Gastrocnemius medialis (tissue), 4 donors: ENCODE measurements at regions of chr15 and their contacts with region 1.

Region 1: DNA sequence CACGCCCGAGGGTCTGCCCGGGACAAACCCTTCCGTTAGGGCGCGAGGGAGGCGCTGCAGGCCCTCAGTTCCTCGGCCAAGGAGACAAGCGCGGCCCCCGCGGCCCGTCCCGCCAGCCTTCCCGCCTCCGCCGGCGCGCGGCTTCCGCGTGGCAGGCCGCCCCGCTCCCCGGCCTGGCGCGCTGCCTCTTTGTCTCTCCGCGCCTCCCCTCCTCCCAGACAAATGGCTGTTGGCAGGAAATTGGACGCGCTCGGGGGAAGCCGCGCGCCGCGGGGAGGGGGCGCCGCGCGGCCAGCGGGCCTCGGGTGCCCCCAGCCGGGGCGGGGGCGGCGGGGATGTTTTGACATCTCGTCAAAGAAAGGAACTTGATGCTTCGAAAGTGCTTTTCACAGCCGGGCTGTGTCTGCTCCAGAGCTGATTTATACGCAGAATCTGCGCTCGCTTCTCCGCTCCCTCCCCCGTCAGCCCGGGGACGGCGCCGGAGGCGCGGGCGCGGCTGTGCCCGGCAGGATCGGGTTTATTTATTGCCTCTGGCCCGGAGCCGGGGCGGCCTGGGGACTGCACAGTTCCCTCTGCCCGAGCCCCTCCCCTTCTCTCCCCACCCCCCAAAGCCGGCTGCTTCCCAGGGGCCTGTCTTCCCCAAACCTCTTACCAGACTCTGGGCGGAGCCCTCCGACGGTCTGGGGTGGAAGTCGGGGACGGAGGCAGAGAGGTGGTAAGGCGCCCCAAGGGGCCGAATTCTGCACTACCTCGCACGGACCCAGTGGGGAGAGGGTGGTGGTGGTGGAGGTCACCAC is 20.7 kb downstream of the SHF start:
- DNase-seq: peak; percentile 64 to 78
- ATAC-seq: peak; percentile 78 to 82
- H3K4me3 ChIP-seq: peak overlapping the region; percentile 66 to 77 (median 75)
- H3K27ac ChIP-seq: peak overlapping the region; percentile 84 to 92 (median 89)
- H3K4me1 ChIP-seq: peaks cover 0 to 4% of the 10 kb centered on the region in 2 donors
- H3K27me3 ChIP-seq: no peaks in the 10 kb centered on the region
- CTCF ChIP-seq: peak; percentile 26 to 59 (median 51)
- POLR2A ChIP-seq: peak; percentile 14 to 20

Region 2: GRCh38 chr15:45187894-45188830 is 21.1 kb after region 1 on chr15 and contains the start of gene SHF:
- in situ Hi-C with region 1: no loop called
- intact Hi-C with region 1: loop called (anchors 2 kb)
- DNase-seq: no peak
- ATAC-seq: peak; percentile 43 to 61
- H3K4me3 ChIP-seq: peak within 1 kb of the TSS; percentile 63 to 76 (median 70)
- H3K27ac ChIP-seq: peak within 1 kb of the TSS; percentile 52 to 72 (median 70)
- H3K4me1 ChIP-seq: peaks cover 11 to 14% of the 10 kb centered on the region in 2 donors
- H3K27me3 ChIP-seq: no peaks in the 10 kb centered on the region
- CTCF ChIP-seq: no peak
- POLR2A ChIP-seq: peak; percentile 7 to 28
- total RNA-seq, gene SHF: 0.80 to 3.3 (median 1.7) TPM

Region 3: DNA sequence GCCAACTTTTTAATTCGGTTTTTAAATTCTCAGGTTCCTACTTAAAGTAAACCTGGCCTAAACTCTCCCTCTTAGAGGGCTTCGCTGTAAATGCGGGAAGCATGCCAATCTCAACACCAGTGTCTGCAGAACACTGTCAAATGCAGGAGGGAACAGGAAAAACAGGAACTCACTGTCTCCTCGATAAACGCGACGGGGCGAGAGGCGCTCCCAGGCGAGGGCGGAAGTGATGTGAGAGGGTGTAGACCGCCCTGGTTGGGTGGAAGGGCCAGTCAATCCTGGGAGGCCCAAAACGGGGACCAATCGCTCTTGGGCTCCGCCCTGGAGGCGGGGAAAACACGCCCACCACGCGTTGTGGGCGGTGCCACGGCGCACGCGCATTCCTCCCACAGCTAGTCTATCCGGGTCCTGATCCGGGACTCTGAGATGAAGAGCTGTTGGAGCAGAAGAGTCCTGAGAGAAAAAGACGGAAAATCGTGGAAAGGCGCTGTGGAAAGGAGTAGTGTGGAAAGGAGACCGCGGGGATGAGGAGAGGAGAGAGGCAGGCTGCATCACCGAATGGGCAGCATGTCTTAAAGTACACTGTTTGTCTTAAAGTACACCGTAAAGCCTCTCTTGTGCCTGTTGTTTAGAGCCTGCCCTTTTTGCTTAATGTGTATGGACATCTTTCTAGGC is 112.1 kb after region 1 on chr15:
- in situ Hi-C with region 1: no loop called
- intact Hi-C with region 1: loop called (anchors 1 kb)
- DNase-seq: peak; percentile 97 to 98
- ATAC-seq: peak; percentile 99
- H3K4me3 ChIP-seq: peak overlapping the region; percentile 58 to 82 (median 70)
- H3K27ac ChIP-seq: peak overlapping the region; percentile 81 to 95 (median 87)
- H3K4me1 ChIP-seq: peaks cover 5 to 13% of the 10 kb centered on the region in 2 donors
- H3K27me3 ChIP-seq: no peaks in the 10 kb centered on the region
- CTCF ChIP-seq: no peak
- POLR2A ChIP-seq: peak; percentile 83 to 87

Region 4: GRCh38 chr15:45287390-45287956 is 120.4 kb after region 1 on chr15:
- in situ Hi-C with region 1: loop called in 1 of 4 experiments (anchors 5 kb)
- intact Hi-C with region 1: no loop called
- DNase-seq: no peak
- ATAC-seq: no peak
- H3K4me3 ChIP-seq: no peak overlapping the region
- H3K27ac ChIP-seq: no peak overlapping the region
- H3K4me1 ChIP-seq: peaks cover 6 to 19% of the 10 kb centered on the region in 2 donors
- H3K27me3 ChIP-seq: no peaks in the 10 kb centered on the region
- CTCF ChIP-seq: no peak
- POLR2A ChIP-seq: no peak